HCT116 (cell line): ENCODE measurements at regions of chr19 and their contacts with region 1.

Region 1: GRCh38 chr19:44113138-44113783 is at the start of gene ZNF225:
- DNase-seq: peak; percentile 97
- ATAC-seq: peak; percentile 98
- H3K4me3 ChIP-seq: peak within 1 kb of the TSS; percentile 72 to 87
- H3K27ac ChIP-seq: peak within 1 kb of the TSS; percentile 34
- H3K4me1 ChIP-seq: peaks cover 2 to 10% of the 10 kb centered on the region in 2 experiments; a peak in 1 of 4 replicates
- H3K27me3 ChIP-seq: no peaks in the 10 kb centered on the region
- CTCF ChIP-seq: no peak
- POLR2A ChIP-seq: peak; percentile 63
- RAD21 ChIP-seq: peak; percentile 19; the same call in 1 of the 2 replicates
- total RNA-seq, gene ZNF225: 2.8 TPM

Region 2: DNA sequence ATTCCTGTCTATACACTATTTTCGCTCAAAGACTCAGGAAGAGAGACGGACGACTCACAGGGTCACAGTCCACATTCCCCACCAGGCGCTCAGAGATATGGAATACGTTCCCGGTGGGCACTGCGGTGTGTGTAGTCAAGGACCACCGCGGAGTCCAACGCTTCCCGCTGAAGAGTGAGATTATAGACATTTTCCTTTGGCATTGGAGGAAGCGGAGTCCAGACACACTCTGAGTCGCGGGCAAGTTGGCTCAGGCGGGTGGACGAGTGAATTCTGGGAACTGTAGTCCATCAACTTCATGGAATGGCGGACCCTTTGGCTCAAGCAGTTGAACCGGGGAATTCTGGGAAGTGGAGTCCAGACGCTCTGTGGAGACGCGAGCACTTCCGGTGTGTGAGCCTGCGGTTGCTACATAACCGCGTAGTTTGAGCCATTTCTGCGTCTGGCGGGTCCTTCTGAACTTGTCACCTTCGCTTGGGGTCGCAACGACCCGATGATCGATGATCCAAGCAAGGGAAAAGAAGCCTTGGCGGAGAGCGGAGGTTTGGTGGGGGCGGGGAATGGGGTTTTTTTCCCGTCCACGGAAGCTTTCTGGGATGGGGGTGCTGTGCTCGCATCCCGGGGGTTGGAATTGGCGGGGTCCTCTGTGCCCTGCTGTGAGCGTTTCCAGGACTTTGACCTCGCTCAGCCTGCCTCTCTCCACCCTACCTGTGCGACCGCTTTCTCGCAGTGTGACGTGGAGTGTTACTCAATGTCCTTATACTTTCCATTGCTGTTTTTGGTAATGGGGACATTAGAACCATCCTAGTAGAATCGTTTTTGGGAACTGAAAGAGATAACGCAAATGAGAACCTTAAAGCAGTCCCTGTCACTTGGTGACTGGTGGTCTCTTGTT is 110.4 kb before region 1 on chr19 and contains the start of gene ZNF230:
- CTCF ChIA-PET with region 1: no interaction called
- POLR2A ChIA-PET with region 1: no interaction called
- RAD21 ChIA-PET with region 1: no interaction called
- intact Hi-C with region 1: loop called (anchors 1 kb)
- DNase-seq: peak; percentile 92
- ATAC-seq: peak; percentile 95
- H3K4me3 ChIP-seq: peak within 1 kb of the TSS; percentile 86 to 88
- H3K27ac ChIP-seq: 0 out of 2 replicates have a peak within 1 kb of the TSS, but pooled peaks have one; percentile 0
- H3K4me1 ChIP-seq: peaks cover 0 to 13% of the 10 kb centered on the region in 2 experiments; a peak in 2 of 4 replicates
- H3K27me3 ChIP-seq: no peaks in the 10 kb centered on the region
- CTCF ChIP-seq: no peak
- POLR2A ChIP-seq: no peak
- RAD21 ChIP-seq: no peak
- total RNA-seq, gene ZNF230: 2.8 TPM

Region 3: GRCh38 chr19:44151491-44151890 is 38.2 kb after region 1 on chr19:
- CTCF ChIA-PET with region 1: no interaction called
- POLR2A ChIA-PET with region 1: no interaction called
- RAD21 ChIA-PET with region 1: no interaction called
- intact Hi-C with region 1: no loop called
- DNase-seq: no peak
- ATAC-seq: no peak
- H3K4me3 ChIP-seq: no peak overlapping the region
- H3K27ac ChIP-seq: no peak overlapping the region
- H3K4me1 ChIP-seq: no peaks in the 10 kb centered on the region
- H3K27me3 ChIP-seq: no peaks in the 10 kb centered on the region
- CTCF ChIP-seq: no peak
- POLR2A ChIP-seq: no peak
- RAD21 ChIP-seq: no peak

Region 4: GRCh38 chr19:44164673-44165512 is 51.6 kb after region 1 on chr19 and contains the start of gene ZNF226:
- CTCF ChIA-PET with region 1: no interaction called
- POLR2A ChIA-PET with region 1: interaction called, 6 read pairs
- RAD21 ChIA-PET with region 1: no interaction called
- intact Hi-C with region 1: loop called (anchors 1 kb)
- DNase-seq: peak; percentile 97
- ATAC-seq: peak; percentile 98
- H3K4me3 ChIP-seq: peak within 1 kb of the TSS; percentile 68 to 76
- H3K27ac ChIP-seq: peak within 1 kb of the TSS; percentile 66
- H3K4me1 ChIP-seq: peaks cover 7 to 14% of the 10 kb centered on the region in 2 experiments
- H3K27me3 ChIP-seq: no peaks in the 10 kb centered on the region
- CTCF ChIP-seq: no peak
- POLR2A ChIP-seq: peak; percentile 61
- RAD21 ChIP-seq: no peak
- total RNA-seq, gene ZNF226: 17.4 TPM

Region 5: GRCh38 chr19:44212250-44212865 is 99.1 kb after region 1 on chr19 and contains the start of gene ZNF227:
- CTCF ChIA-PET with region 1: no interaction called
- POLR2A ChIA-PET with region 1: no interaction called
- RAD21 ChIA-PET with region 1: no interaction called
- intact Hi-C with region 1: loop called (anchors 2 kb)
- DNase-seq: peak; percentile 86
- ATAC-seq: peak; percentile 96
- H3K4me3 ChIP-seq: peak within 1 kb of the TSS; percentile 85
- H3K27ac ChIP-seq: peak within 1 kb of the TSS; percentile 47
- H3K4me1 ChIP-seq: peaks cover 4 to 5% of the 10 kb centered on the region in 2 experiments; a peak in 1 of 4 replicates
- H3K27me3 ChIP-seq: no peaks in the 10 kb centered on the region
- CTCF ChIP-seq: no peak
- POLR2A ChIP-seq: no peak
- RAD21 ChIP-seq: no peak
- total RNA-seq, gene ZNF227: 14.4 TPM

Region 6: DNA sequence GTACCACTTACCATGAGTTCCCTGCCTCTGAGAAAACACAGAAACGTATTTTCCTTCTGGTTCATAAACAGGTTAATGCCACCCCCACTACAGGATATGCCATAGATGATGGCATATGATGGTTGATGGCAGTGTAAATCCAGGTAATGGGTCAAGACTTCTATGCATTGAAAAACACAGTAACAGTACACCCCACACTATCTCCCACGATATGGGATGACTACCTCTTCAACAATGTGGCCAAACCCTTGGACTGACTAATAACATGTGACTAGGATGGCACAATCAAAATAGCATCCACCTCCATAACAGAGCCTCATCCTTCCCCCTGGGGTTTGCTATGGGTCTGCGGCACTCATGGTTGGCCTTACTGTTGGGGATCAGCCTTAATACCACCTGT is 169.6 kb after region 1 on chr19:
- CTCF ChIA-PET with region 1: no interaction called
- POLR2A ChIA-PET with region 1: no interaction called
- RAD21 ChIA-PET with region 1: no interaction called
- intact Hi-C with region 1: no loop called
- DNase-seq: no peak
- ATAC-seq: no peak
- H3K4me3 ChIP-seq: no peak overlapping the region
- H3K27ac ChIP-seq: no peak overlapping the region
- H3K4me1 ChIP-seq: no peaks in the 10 kb centered on the region; a peak in 1 of 4 replicates
- H3K27me3 ChIP-seq: no peaks in the 10 kb centered on the region
- CTCF ChIP-seq: no peak
- POLR2A ChIP-seq: no peak
- RAD21 ChIP-seq: no peak

Region 7: GRCh38 chr19:44304659-44305193 is 191.5 kb after region 1 on chr19 and contains the start of gene ZNF235:
- CTCF ChIA-PET with region 1: no interaction called
- POLR2A ChIA-PET with region 1: no interaction called
- RAD21 ChIA-PET with region 1: no interaction called
- intact Hi-C with region 1: loop called (anchors 2 kb)
- DNase-seq: peak; percentile 89
- ATAC-seq: peak; percentile 99
- H3K4me3 ChIP-seq: peak within 1 kb of the TSS; percentile 76 to 86
- H3K27ac ChIP-seq: peak within 1 kb of the TSS; percentile 60
- H3K4me1 ChIP-seq: peaks cover 3 to 14% of the 10 kb centered on the region in 2 experiments; a peak in 3 of 4 replicates
- H3K27me3 ChIP-seq: no peaks in the 10 kb centered on the region
- CTCF ChIP-seq: no peak
- POLR2A ChIP-seq: no peak
- RAD21 ChIP-seq: no peak; the same call in 1 of the 2 replicates
- total RNA-seq, gene ZNF235: 5.7 TPM

Region 8: GRCh38 chr19:44345959-44346358 is 232.7 kb after region 1 on chr19:
- CTCF ChIA-PET with region 1: no interaction called
- POLR2A ChIA-PET with region 1: no interaction called
- RAD21 ChIA-PET with region 1: no interaction called
- intact Hi-C with region 1: no loop called
- DNase-seq: no peak
- ATAC-seq: no peak
- H3K4me3 ChIP-seq: no peak overlapping the region
- H3K27ac ChIP-seq: no peak overlapping the region
- H3K4me1 ChIP-seq: no peaks in the 10 kb centered on the region
- H3K27me3 ChIP-seq: no peaks in the 10 kb centered on the region
- CTCF ChIP-seq: no peak
- POLR2A ChIP-seq: no peak
- RAD21 ChIP-seq: no peak